ENCODE measurements at regions of chr6 and their contacts with region 1.

Region 1: GRCh38 chr6:123777563-123777962 is 26.1 kb upstream of the NKAIN2 start:
- DNase-seq: peak; percentile 6
- H3K4me3 ChIP-seq: no peak overlapping the region
- H3K27ac ChIP-seq: no peak overlapping the region
- H3K4me1 ChIP-seq: no peaks in the 10 kb centered on the region
- H3K27me3 ChIP-seq: peaks cover 4% of the 10 kb centered on the region
- CTCF ChIP-seq: peak; percentile 28 to 43

Region 2: GRCh38 chr6:123677897-123678296 is 99.7 kb before region 1 on chr6:
- CTCF ChIA-PET with region 1: no interaction called
- dilution Hi-C with region 1: no loop called
- in situ Hi-C with region 1: no loop called
- intact Hi-C with region 1: no loop called
- DNase-seq: no peak
- H3K4me3 ChIP-seq: no peak overlapping the region
- H3K27ac ChIP-seq: no peak overlapping the region
- H3K4me1 ChIP-seq: no peaks in the 10 kb centered on the region
- H3K27me3 ChIP-seq: no peaks in the 10 kb centered on the region
- CTCF ChIP-seq: no peak

Region 3: DNA sequence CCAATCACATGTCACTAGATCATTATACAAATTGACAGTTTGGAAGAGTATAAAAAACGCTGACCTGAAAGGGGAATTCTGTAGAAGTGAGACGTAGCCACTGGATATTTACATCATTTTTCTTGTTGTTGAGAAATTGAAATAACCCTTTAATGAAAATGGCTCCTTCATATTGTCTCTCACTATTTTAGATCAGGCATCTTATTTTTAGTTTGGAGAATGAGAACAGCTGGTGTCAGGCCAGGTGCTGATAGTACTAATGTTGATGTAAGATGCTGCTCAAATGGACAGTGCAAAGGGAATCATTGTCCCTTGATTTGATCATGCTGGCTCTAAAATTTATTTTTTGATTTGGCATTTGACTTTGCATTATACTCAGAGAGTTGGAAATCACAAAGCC is 43.5 kb after region 1 on chr6:
- CTCF ChIA-PET with region 1: no interaction called
- dilution Hi-C with region 1: no loop called
- in situ Hi-C with region 1: no loop called
- intact Hi-C with region 1: no loop called
- DNase-seq: no peak
- H3K4me3 ChIP-seq: no peak overlapping the region
- H3K27ac ChIP-seq: no peak overlapping the region
- H3K4me1 ChIP-seq: peaks cover 3% of the 10 kb centered on the region
- H3K27me3 ChIP-seq: no peaks in the 10 kb centered on the region
- CTCF ChIP-seq: no peak

Region 4: DNA sequence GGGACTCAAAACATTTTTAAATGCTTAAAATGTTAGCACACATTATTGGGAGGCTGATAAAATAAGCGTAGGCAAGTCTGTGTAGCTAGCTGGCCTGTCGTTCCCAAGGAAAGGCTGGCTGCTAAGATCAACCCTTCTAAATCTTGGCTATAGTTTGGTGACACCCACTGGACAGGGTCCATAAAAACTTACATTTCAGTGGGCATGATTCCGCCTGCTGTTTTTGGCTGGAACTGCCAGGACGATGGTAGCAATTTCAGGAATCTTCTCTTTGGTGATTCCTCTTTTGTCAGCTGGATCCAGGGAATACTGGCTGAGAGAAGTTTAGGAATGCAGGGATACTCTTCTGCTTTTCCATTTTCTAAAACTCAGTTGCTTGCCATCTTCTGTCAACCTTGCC is 188.3 kb after region 1 on chr6:
- CTCF ChIA-PET with region 1: no interaction called
- dilution Hi-C with region 1: no loop called
- in situ Hi-C with region 1: no loop called
- intact Hi-C with region 1: loop called (anchors 1 kb)
- DNase-seq: peak; percentile 38
- H3K4me3 ChIP-seq: no peak overlapping the region
- H3K27ac ChIP-seq: no peak overlapping the region
- H3K4me1 ChIP-seq: no peaks in the 10 kb centered on the region
- H3K27me3 ChIP-seq: no peaks in the 10 kb centered on the region
- CTCF ChIP-seq: peak; percentile 76 to 82

Region 5: DNA sequence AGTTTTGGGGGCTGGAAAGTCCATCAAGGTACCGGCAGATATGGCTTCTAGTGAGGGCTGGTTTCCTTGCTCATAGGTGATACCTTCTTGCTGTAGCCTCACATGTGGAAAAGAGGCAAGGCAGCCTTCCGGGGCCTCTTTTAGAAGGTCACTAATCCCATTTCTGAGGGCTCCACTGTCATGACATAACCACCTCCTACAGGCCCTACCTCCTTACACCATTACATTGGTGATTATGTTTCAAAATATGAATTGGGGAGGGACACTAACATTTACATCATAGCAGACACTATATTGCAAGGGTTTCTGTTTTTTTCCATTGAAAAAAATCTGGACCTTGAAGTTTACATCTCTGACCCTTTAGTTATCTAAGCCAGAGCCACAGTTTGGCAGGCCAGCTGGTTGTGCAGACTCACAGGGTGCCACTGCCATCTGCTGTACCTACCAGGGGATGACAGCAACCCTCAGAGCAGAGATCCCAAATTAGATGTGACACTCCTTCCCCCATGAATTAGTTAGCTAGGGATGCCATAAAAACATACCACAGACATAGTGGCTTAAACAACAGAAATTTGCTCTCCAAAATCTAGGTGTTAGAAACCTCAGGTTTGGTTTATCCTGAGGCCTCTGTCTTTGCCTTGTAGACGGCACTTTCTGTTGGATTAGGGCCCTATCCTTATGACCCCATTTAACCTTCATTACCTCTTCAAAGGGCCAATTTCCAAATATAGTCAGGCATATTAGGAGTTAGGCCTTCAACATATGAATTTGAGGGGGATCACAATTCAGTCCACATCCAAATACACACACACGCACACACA is 1018.3 kb after region 1 on chr6:
- CTCF ChIA-PET with region 1: no interaction called
- dilution Hi-C with region 1: loop called (anchors 25 kb)
- in situ Hi-C with region 1: no loop called
- intact Hi-C with region 1: loop called (anchors 5 kb)
- DNase-seq: no peak
- H3K4me3 ChIP-seq: no peak overlapping the region
- H3K27ac ChIP-seq: no peak overlapping the region
- H3K4me1 ChIP-seq: peaks cover 7% of the 10 kb centered on the region
- H3K27me3 ChIP-seq: peaks cover 2% of the 10 kb centered on the region
- CTCF ChIP-seq: peak; percentile 58 to 75

Region 6: DNA sequence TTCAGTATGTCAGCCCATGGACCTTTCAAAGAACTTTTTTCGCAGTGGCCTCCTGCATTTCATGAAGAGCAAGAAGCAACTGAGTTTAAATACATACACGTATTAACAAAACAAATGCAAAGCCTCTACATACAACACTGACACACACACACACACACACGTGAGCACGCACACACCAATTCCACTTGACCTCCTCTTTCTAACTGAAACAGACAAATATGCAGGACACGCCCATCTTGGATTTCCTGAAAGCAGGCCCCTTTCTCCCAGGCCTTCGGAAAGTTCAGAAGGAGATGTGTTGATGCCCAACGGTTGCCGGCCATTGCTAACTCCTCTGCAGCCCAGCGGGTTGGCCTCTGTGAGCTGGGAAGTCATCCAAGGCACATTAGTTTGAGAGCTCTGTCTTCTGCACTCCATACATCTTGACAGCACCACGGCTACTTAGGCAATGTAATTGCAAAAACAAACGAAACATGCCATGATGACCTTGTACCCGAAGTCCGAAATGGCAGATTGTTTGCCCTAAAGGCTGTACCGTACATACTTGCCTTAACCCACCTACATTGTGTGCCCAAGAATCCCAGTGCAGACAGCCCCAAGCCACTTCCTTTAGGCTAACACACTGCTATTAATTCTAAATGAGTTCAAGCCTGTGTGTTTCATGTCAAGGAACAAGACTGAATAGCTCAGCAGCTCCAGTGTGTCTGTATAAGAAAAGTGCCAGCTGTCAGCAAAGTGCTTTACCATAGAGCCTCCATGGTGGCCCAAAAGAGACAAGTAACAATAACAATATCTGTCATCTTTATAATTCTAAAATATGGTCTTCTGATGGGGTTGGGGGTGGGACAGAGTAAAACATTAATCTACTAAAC is 1045.9 kb after region 1 on chr6:
- CTCF ChIA-PET with region 1: no interaction called
- dilution Hi-C with region 1: loop called (anchors 25 kb)
- in situ Hi-C with region 1: no loop called
- intact Hi-C with region 1: no loop called
- DNase-seq: no peak
- H3K4me3 ChIP-seq: no peak overlapping the region
- H3K27ac ChIP-seq: no peak overlapping the region
- H3K4me1 ChIP-seq: no peaks in the 10 kb centered on the region
- H3K27me3 ChIP-seq: no peaks in the 10 kb centered on the region
- CTCF ChIP-seq: no peak

Region 7: GRCh38 chr6:124854338-124854922 is 1076.9 kb after region 1 on chr6:
- CTCF ChIA-PET with region 1: no interaction called
- dilution Hi-C with region 1: no loop called
- in situ Hi-C with region 1: no loop called
- intact Hi-C with region 1: loop called (anchors 5 kb)
- DNase-seq: no peak
- H3K4me3 ChIP-seq: no peak overlapping the region
- H3K27ac ChIP-seq: no peak overlapping the region
- H3K4me1 ChIP-seq: no peaks in the 10 kb centered on the region
- H3K27me3 ChIP-seq: no peaks in the 10 kb centered on the region
- CTCF ChIP-seq: peak; percentile 19 to 22

Measured in mammary epithelial cell (primary cell).